Panc1 (cell line): ENCODE measurements at regions of chr16 and their contacts with region 1.

Region 1: GRCh38 chr16:67456391-67457081 is 24.4 kb downstream of the ATP6V0D1 start:
- DNase-seq: no peak
- ATAC-seq: no peak
- H3K4me3 ChIP-seq: no peak overlapping the region
- H3K27ac ChIP-seq: no peak overlapping the region
- H3K4me1 ChIP-seq: no peaks in the 10 kb centered on the region
- H3K27me3 ChIP-seq: no peaks in the 10 kb centered on the region
- CTCF ChIP-seq: no peak

Region 2: GRCh38 chr16:67384778-67385510 is 71.6 kb before region 1 on chr16:
- CTCF ChIA-PET with region 1: interaction called, 10 read pairs
- POLR2A ChIA-PET with region 1: no interaction called
- in situ Hi-C with region 1: no loop called
- intact Hi-C with region 1: no loop called
- DNase-seq: no peak
- ATAC-seq: no peak
- H3K4me3 ChIP-seq: no peak overlapping the region
- H3K27ac ChIP-seq: no peak overlapping the region
- H3K4me1 ChIP-seq: no peaks in the 10 kb centered on the region
- H3K27me3 ChIP-seq: no peaks in the 10 kb centered on the region
- CTCF ChIP-seq: no peak

Region 3: GRCh38 chr16:67897231-67897630 is 440.7 kb after region 1 on chr16:
- CTCF ChIA-PET with region 1: no interaction called
- POLR2A ChIA-PET with region 1: no interaction called
- in situ Hi-C with region 1: no loop called
- intact Hi-C with region 1: no loop called
- DNase-seq: no peak
- ATAC-seq: no peak
- H3K4me3 ChIP-seq: no peak overlapping the region
- H3K27ac ChIP-seq: no peak overlapping the region
- H3K4me1 ChIP-seq: no peaks in the 10 kb centered on the region
- H3K27me3 ChIP-seq: no peaks in the 10 kb centered on the region
- CTCF ChIP-seq: no peak